CD14-positive monocyte (primary cell): ENCODE measurements at regions of chr1 and their contacts with region 1.

Region 1: GRCh38 chr1:40257688-40258444 is at the start of gene ZMPSTE24:
- DNase-seq: peak; percentile 95 to 98 (median 98)
- H3K4me3 ChIP-seq: peak within 1 kb of the TSS; percentile 88 to 99 (median 95)
- H3K4me3 Mint-ChIP-seq: peak within 1 kb of the TSS; percentile 94 to 98
- H3K27ac ChIP-seq: peak within 1 kb of the TSS; percentile 98 to 99
- H3K27ac Mint-ChIP-seq: peak within 1 kb of the TSS; percentile 99 to 100 (median 100)
- H3K4me1 ChIP-seq: peaks cover 11 to 19% of the 10 kb centered on the region in 2 donors
- H3K4me1 Mint-ChIP-seq: peaks cover 15% of the 10 kb centered on the region
- H3K27me3 ChIP-seq: no peaks in the 10 kb centered on the region
- H3K27me3 Mint-ChIP-seq: peaks cover 0 to 2% (median 0%) of the 10 kb centered on the region in 3 donors
- CTCF ChIP-seq: no peak
- polyA plus RNA-seq, gene ZMPSTE24: 6.4 to 45.6 (median 36.0) TPM

Region 2: DNA sequence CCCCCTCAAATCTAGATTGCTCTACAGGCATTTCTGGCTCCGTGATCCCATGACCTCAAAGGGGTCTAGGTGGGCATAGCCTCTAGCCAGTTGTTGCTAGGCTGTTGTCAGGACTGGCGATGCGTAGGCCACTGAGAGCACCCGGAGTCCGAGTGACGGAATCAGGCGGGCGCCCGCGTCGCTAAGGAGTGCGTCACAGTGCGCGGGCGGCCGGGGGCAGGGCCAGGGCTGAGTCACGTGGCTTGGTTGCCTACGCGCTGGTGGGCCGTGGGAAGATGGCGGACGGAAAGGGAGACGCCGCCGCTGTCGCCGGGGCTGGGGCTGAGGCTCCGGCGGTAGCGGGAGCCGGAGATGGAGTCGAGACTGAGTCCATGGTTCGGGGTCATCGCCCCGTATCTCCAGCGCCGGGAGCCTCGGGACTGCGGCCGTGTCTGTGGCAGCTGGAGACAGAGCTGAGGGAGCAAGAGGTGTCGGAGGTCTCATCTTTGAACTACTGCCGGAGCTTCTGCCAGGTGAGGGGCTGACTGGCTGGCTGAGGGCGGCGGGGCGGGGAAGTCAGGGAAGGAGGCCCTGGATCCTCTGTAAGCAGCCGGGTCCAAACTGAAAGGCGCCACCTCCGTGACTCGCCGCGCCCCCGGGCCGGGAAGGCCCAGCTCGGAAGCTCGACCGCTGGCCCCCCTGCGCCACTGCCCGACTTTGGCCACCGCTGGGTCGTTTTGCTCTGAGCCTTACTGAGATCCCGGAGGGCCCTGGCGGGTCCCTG is 96.6 kb before region 1 on chr1 and contains the start of gene RLF:
- intact Hi-C with region 1: loop called (anchors 5 kb)
- DNase-seq: peak; percentile 92 to 96 (median 93)
- H3K4me3 ChIP-seq: peak within 1 kb of the TSS; percentile 64 to 94 (median 93)
- H3K4me3 Mint-ChIP-seq: no peak within 1 kb of the TSS
- H3K27ac ChIP-seq: peak within 1 kb of the TSS; percentile 91 to 96
- H3K27ac Mint-ChIP-seq: no peak within 1 kb of the TSS
- H3K4me1 ChIP-seq: peaks cover 21 to 30% of the 10 kb centered on the region in 2 donors
- H3K4me1 Mint-ChIP-seq: peaks cover 12% of the 10 kb centered on the region
- H3K27me3 ChIP-seq: no peaks in the 10 kb centered on the region
- H3K27me3 Mint-ChIP-seq: peaks cover 0 to 5% (median 0%) of the 10 kb centered on the region in 3 donors
- CTCF ChIP-seq: no peak
- polyA plus RNA-seq, gene RLF: 3.0 to 9.2 (median 6.2) TPM

Region 3: DNA sequence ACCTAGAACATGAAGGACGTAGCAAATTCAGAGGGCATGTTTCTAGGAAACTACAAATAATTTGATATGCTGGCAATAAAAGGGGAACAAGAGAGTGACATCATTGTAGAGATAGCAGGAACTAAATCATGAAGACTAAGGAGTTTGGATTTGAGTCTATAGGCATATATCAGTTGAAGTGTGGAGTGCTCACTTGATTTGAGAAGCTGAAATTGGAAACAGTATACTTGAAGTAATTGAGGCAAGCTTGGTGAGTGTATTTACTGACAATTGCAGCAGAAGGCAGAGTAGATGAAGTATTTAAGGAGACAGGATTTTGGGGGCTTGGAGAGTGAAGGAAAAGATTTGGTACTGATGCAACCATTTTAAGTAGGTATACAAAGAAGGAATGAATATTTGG is 16.5 kb before region 1 on chr1:
- intact Hi-C with region 1: loop called in 1 of 2 experiments (anchors 2 kb)
- DNase-seq: peak; percentile 11 to 36 (median 30)
- H3K4me3 ChIP-seq: peak overlapping the region in 1 of 3 experiments; percentile 14
- H3K4me3 Mint-ChIP-seq: peak overlapping the region; percentile 35 to 61
- H3K27ac ChIP-seq: peak overlapping the region in 1 of 2 donors; percentile 69
- H3K27ac Mint-ChIP-seq: peak overlapping the region; percentile 73 to 95 (median 86)
- H3K4me1 ChIP-seq: peaks cover 21 to 32% of the 10 kb centered on the region in 2 donors
- H3K4me1 Mint-ChIP-seq: peaks cover 26% of the 10 kb centered on the region
- H3K27me3 ChIP-seq: no peaks in the 10 kb centered on the region
- H3K27me3 Mint-ChIP-seq: peaks cover 2 to 7% (median 2%) of the 10 kb centered on the region in 3 donors
- CTCF ChIP-seq: no peak

Region 4: DNA sequence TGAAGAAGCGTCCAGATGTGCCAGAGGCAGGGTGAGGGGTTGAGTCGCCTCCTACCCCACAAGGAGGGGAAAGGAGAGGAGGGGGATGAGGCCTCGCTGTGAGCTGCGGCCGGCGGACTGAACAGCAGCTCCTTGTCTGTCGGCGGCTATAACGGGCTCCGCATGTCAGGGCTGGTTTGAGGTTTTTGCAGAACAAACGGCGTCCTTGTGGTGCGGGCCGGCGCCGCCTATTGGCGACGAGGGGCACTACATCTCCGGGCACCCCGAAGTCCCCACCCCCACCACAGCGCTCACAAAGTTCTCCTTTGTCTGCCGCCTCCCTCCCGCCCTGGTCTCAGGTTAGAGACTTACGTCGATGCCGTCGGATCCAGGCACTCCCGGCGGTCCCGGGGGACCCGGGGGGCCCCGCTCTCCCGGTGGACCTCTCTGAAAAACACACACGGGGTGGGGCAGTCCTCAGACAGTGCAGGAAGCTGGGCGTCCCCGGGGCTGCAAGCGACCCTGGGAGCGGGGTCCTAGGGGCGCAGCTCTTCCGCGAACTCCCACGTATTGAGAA is 57.5 kb after region 1 on chr1:
- intact Hi-C with region 1: loop called in 1 of 2 experiments (anchors 10 kb)
- DNase-seq: peak; percentile 76 to 86 (median 85)
- H3K4me3 ChIP-seq: peak overlapping the region; percentile 34 to 76 (median 53)
- H3K4me3 Mint-ChIP-seq: peak overlapping the region; percentile 83 to 94
- H3K27ac ChIP-seq: no peak overlapping the region
- H3K27ac Mint-ChIP-seq: peak overlapping the region in 1 of 7 donors; percentile 83
- H3K4me1 ChIP-seq: peaks cover 53 to 63% of the 10 kb centered on the region in 2 donors
- H3K4me1 Mint-ChIP-seq: peaks cover 50% of the 10 kb centered on the region
- H3K27me3 ChIP-seq: peaks cover 21 to 34% of the 10 kb centered on the region in 2 donors
- H3K27me3 Mint-ChIP-seq: peaks cover 34 to 56% (median 51%) of the 10 kb centered on the region in 3 donors
- CTCF ChIP-seq: peak; percentile 96

Region 5: DNA sequence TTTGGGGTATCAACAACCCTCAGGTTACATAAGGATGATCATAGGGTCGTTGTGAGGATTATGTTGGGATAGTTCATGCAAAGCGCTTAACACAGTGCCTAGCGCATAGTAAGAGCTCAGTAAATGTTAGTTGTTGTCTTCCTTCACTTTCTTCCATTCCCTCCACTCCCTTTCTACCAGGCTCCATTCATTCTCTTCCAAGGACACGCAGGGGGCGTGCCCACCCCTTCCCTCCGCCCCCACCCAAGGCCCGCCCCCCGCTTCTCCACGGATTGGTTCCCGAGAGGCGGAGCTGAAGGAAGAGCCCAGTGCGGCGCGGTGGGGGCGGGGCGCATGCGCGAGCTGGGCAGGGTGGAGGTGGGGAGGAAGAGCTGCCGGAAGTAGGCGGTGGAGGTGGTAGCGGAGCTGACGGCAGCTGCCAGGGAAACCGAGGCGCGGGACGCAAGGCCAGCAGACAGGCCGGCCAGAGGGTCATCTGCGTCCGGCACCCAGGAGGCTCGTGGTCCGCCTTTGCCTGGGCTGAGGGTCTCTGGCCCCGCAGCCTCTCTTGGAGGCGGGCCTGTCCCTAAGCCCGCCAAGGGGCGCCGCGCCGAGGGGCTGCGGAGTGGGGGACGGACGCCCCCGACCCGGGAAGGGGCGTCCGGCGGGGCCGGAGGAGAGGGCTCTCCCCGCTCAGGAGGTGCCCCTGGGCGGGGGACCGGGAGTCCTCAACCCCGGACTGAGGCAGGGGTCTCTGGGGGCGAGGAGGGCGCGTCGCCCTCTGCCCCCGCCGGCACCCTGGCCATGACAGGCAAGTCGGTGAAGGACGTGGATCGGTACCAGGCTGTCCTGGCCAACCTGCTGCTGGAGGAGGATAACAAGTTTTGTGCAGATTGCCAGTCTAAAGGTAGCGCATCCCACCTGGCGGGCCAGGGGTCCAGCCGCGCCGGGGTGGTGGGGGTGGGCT is 115.7 kb after region 1 on chr1 and contains the start of gene SMAP2:
- intact Hi-C with region 1: loop called in 1 of 2 experiments (anchors 5 kb)
- DNase-seq: peak; percentile 92 to 97 (median 95)
- H3K4me3 ChIP-seq: peak within 1 kb of the TSS; percentile 87 to 100 (median 90)
- H3K4me3 Mint-ChIP-seq: peak within 1 kb of the TSS; percentile 100
- H3K27ac ChIP-seq: peak within 1 kb of the TSS; percentile 97 to 98
- H3K27ac Mint-ChIP-seq: peak within 1 kb of the TSS; percentile 95 to 99 (median 98)
- H3K4me1 ChIP-seq: peaks cover 32 to 43% of the 10 kb centered on the region in 2 donors
- H3K4me1 Mint-ChIP-seq: peaks cover 51% of the 10 kb centered on the region
- H3K27me3 ChIP-seq: no peaks in the 10 kb centered on the region
- H3K27me3 Mint-ChIP-seq: peaks cover 1 to 3% (median 2%) of the 10 kb centered on the region in 3 donors
- CTCF ChIP-seq: no peak
- polyA plus RNA-seq, gene SMAP2: 302 to 382 (median 359) TPM

Region 6: DNA sequence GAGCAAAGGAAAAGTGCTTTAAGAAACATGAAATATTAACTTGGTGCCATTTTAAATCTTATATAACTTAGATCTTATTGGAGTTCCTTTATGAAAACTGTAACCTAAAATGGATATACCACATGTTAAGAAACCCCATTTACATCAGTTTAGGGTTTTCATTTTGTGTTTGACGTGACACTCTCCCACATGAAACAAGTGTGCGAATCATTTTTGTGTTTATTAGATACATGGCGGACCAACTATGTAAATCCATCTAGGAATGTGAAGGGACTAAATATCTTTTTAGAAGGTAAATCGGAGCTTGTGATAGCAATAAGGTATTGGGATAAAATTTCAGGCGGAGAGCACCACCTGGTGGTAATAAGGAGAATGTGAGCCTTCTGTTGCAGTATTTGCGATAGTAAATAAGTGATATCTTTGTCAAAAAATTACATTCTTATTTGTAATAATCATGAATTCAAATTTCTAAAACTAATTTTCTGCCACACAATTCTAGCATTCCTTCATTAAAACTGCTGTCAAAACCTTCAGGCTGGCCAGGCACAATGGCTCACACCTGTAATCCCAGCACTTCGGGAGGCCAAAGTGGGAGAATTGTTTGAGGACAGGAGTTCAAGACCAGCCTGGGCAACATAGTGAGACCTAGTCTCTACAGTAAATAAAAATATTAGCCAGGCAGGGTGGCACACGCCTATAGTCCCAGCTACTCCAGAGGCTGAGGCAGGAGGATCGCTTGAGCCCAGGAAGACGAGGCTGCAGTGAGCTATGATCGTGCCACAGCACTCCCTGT is 147.0 kb after region 1 on chr1:
- intact Hi-C with region 1: loop called in 1 of 2 experiments (anchors 10 kb)
- DNase-seq: peak in 2 of 3 donors; percentile 63 to 74
- H3K4me3 ChIP-seq: peak overlapping the region in 1 of 3 experiments; percentile 16
- H3K4me3 Mint-ChIP-seq: no peak overlapping the region
- H3K27ac ChIP-seq: peak overlapping the region in 1 of 2 donors; percentile 71
- H3K27ac Mint-ChIP-seq: peak overlapping the region in 5 of 7 donors; percentile 9 to 94 (median 88)
- H3K4me1 ChIP-seq: peaks cover 39 to 48% of the 10 kb centered on the region in 2 donors
- H3K4me1 Mint-ChIP-seq: peaks cover 48% of the 10 kb centered on the region
- H3K27me3 ChIP-seq: no peaks in the 10 kb centered on the region
- H3K27me3 Mint-ChIP-seq: peaks cover 0 to 3% (median 0%) of the 10 kb centered on the region in 3 donors
- CTCF ChIP-seq: peak; percentile 89

Region 7: GRCh38 chr1:40449684-40450494 is 192.0 kb after region 1 on chr1 and contains the start of gene ZFP69B:
- intact Hi-C with region 1: no loop called
- DNase-seq: peak; percentile 73 to 82 (median 80)
- H3K4me3 ChIP-seq: peak within 1 kb of the TSS; percentile 59 to 84 (median 64)
- H3K4me3 Mint-ChIP-seq: peak within 1 kb of the TSS; percentile 88 to 92
- H3K27ac ChIP-seq: peak within 1 kb of the TSS; percentile 25 to 53
- H3K27ac Mint-ChIP-seq: peak within 1 kb of the TSS in 6 of 7 donors; percentile 3 to 73 (median 44)
- H3K4me1 ChIP-seq: peaks cover 15 to 20% of the 10 kb centered on the region in 2 donors
- H3K4me1 Mint-ChIP-seq: peaks cover 20% of the 10 kb centered on the region
- H3K27me3 ChIP-seq: no peaks in the 10 kb centered on the region
- H3K27me3 Mint-ChIP-seq: peaks cover 0 to 1% (median 0%) of the 10 kb centered on the region in 3 donors
- CTCF ChIP-seq: no peak
- polyA plus RNA-seq, gene ZFP69B: 0.20 to 0.67 TPM in 2 of 3 donors, not detected in the other